OCI-LY7 (cell line): ENCODE measurements at regions of chr17 and their contacts with region 1.

Region 1: DNA sequence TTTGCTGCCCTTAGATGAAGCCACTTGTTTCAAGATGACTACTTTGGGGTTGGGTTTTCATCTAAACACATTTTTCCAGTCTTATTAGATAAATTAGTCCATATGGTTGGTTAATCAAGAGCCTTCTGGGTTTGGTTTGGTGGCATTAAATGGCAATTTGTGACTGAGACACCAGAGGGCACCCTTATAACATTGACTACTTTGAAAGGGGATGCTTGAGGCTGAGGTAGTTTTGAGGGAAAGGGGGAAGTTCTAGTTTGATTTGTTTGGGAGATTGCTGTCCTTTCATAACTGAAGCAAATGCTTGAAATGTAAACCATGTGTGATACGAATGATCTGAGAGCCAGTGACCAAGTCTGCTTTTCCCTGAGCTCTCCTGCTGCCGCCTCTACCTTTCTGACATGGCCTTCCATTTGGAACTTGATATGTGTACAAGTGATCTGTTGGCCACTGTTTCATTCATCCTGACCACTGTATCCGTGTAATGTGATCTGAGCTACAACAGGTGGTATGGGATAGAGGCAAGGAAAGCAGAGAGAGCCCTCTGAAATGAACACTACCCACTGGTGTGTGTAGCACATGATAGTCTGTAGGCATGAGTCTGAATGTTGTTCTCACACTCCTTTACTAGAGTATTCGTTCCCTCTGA is 5.8 kb upstream of the RARA start:
- DNase-seq: peak; percentile 60
- H3K4me3 ChIP-seq: no peak overlapping the region
- H3K27ac ChIP-seq: no peak overlapping the region
- H3K4me1 ChIP-seq: peaks cover under 1% of the 10 kb centered on the region
- CTCF ChIP-seq: peak; percentile 87

Region 2: GRCh38 chr17:40355123-40355803 is 52.1 kb after region 1 on chr17:
- CTCF ChIA-PET with region 1: interaction called, 4 read pairs
- POLR2A ChIA-PET with region 1: interaction called, 3 read pairs
- intact Hi-C with region 1: loop called (anchors 1 kb)
- DNase-seq: peak; percentile 69
- H3K4me3 ChIP-seq: no peak overlapping the region
- H3K27ac ChIP-seq: no peak overlapping the region
- H3K4me1 ChIP-seq: peaks cover 8% of the 10 kb centered on the region
- CTCF ChIP-seq: peak; percentile 97

Region 3: DNA sequence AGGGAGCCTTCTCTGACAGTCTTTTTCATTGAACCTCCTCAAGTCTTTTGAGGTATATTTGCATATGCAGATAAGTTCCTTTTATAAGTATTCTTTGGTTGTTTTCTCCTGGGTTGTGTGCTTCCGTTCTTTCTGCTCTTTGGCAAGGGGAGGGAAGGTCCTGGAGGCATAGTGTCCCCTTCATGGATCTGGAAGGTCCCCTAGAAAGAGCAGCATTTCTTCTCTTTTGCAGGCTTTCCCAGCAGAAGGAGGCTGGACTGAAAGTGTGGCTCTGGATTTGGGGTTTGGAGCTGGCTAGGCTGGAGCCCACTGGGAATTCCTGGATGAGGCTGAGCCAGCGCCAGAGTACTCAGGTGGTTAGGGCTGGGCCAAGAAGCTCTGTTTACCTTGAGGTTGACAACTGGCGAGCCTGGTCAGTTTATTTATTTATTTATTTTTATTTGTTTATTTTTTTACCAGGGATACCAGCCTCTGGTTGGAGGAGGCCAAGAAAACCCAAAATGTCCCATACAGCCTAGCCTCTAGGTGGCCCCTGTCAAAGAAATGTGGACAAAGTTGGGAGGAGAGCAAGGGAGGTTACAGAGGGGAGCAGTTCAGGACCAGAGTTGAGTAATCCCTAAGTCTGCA is 120.0 kb after region 1 on chr17:
- CTCF ChIA-PET with region 1: no interaction called
- POLR2A ChIA-PET with region 1: no interaction called
- intact Hi-C with region 1: no loop called
- DNase-seq: no peak
- H3K4me3 ChIP-seq: no peak overlapping the region
- H3K27ac ChIP-seq: no peak overlapping the region
- H3K4me1 ChIP-seq: peaks cover 19% of the 10 kb centered on the region
- CTCF ChIP-seq: peak; percentile 42